GM10248 (cell line): ENCODE measurements at regions of chr2 and their contacts with region 1.

Region 1: DNA sequence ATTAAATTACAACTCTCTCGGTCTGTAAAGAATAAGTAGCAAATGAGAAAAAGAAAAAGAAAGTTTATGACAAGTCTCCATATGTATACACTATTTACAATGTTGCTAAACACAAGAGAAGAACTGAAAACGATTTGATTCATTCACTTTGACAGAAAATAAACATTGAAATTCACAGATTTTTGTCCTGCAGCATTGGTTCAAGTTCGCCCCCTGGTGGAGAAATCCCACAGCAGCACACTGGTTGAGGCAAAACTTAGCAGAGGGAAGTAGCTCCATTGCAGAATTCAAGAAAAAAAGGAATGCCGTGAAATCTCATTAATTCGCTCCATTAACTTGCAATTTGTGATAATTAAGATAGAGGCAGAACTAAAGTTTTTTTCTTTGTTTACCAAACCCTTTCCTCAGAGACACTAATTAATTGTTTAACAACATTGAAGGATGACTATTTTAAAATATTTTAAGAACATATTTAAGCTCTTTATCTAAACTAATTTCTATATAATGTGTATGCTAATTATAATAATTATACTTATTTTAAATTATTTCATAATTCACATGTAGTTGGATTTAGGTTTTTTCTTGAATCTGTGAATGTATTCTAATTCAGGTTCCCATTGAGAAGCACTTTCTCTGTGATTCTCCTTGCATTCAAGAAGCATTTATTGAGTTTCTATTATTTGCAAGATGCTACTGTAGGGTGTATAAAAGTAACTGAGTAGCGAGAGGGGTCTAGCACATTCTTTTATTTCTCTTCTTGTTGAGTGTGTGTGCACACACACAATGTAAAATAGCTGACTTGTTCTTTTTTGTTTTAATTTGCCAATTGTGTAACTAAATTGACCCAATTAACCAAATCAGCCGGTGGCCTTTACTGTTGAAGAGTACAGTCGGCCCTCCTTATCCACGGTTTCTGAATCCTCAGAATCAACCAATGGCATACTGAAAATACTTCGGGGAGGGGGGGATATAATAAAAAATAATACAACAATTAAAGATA is 74.1 kb downstream of the COL4A3 start:
- DNase-seq: peak; percentile 50
- CTCF ChIP-seq: peak; percentile 93

Region 2: DNA sequence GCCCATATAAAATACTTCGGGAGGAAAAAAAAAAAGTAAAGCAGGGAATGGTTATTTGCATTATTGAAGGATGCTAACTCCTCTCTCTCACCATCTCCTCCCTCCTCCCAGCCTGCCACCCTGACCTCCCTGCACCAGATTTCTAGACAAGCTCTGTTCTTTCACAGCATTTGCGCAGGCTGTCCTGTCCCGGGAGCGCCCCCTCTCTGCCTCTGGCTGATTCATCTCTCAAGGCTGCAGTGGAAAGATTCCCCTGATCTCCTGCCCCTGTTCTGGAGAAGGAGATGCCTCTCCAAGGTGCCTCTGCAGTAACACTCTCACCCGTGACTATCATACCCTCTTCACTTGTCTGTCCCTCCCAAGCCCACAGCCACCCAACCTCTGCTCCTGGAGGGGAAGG is 113.0 kb before region 1 on chr2:
- CTCF ChIA-PET with region 1: interaction called, 117 read pairs
- POLR2A ChIA-PET with region 1: interaction called, 3 read pairs
- DNase-seq: no peak
- CTCF ChIP-seq: no peak

Region 3: GRCh38 chr2:227188292-227188691 is 50.2 kb before region 1 on chr2:
- CTCF ChIA-PET with region 1: interaction called, 11 read pairs
- POLR2A ChIA-PET with region 1: no interaction called
- DNase-seq: no peak
- CTCF ChIP-seq: no peak

Region 4: DNA sequence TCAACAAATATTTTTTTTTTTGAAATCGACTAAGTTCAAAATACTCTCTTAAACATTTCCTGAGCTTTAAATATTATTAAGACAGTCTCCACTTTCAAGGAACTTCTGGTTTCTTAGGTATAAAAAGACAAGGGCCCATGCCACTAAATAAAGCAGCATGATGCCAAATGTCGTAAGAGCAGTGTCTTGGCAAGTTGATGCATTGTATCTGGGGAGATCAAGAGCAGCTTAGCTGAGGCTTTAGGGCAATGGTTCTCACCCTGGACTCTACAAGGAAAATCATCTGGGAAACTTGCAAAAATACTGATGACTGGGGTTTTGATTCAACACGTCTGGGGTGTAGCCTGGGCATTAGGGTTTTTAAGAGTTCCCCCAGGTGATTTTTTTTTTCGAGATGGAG is 32.8 kb before region 1 on chr2:
- CTCF ChIA-PET with region 1: interaction called, 19 read pairs
- POLR2A ChIA-PET with region 1: no interaction called
- DNase-seq: no peak
- CTCF ChIP-seq: no peak

Region 5: DNA sequence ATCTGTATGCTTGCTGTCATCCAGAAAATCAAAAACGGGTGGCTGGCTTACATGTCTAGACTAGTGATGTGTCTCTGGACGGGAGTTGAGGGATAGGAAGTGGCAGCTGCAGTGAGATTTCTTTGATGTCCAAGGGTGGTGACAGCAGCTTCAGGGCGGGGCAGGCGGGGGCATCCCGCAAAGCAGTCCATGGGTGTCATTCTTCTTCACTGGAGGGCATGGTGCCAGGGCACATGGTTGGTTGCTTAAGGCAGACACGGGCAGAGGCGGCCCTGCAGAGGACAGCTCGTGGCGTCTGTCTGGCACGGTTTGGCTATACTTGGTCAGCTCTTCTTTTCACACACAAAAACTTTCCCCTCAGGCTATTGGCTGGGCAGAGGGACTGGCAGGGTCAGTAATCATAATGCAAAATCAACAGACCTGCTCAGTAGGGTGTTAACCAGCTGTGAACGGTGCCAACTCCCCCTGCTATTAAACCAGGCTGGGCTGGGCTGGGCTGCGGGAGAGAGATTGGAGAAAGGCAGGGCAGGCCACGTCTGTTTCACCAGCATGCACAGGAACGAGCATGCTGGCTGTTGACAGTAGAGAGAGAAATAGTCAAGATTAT is 10.4 kb before region 1 on chr2:
- CTCF ChIA-PET with region 1: interaction called, 43 read pairs
- POLR2A ChIA-PET with region 1: no interaction called
- DNase-seq: no peak
- CTCF ChIP-seq: no peak

Region 6: GRCh38 chr2:227256605-227257004 is 18.1 kb after region 1 on chr2:
- CTCF ChIA-PET with region 1: interaction called, 74 read pairs
- POLR2A ChIA-PET with region 1: no interaction called
- DNase-seq: no peak
- CTCF ChIP-seq: no peak

Region 7: DNA sequence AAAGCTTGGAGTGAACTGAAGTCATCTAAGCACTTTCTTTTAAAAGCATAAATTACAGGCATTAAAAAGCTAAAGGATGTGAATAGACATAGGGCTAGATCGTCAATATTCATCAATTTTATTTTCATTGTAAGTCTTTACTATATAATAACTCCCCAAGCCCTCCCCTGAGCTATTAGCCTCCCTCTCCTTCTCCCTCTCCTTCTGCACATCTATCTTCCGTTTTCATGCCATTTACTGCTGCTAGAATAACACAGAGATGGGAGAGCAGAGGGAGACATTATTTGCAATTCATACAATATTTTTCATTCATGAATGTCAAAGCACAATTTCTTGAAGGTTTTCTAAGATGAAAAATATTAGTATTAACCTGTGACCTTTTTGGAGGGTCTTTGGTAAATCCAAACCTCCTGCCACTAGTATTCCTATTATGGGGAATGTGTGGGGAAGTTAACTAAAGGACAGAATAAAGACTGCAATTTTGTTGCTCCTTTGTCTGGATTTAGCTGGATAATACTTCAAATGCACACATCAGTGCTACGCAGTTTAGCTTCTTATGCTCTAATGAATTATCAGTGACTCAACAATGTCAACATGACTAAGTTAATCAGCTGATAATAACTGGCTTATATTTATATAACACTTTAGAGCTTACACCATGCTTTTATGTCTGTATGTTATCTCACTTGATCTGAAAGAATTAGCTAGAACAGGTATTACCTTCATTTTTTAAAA is 58.3 kb after region 1 on chr2:
- CTCF ChIA-PET with region 1: interaction called, 12 read pairs
- POLR2A ChIA-PET with region 1: no interaction called
- DNase-seq: no peak
- CTCF ChIP-seq: no peak